ENCODE measurements at regions of chr4 and their contacts with region 1.

Region 1: GRCh38 chr4:88792268-88792781 is 94.7 kb upstream of the NAP1L5 start:
- DNase-seq: no peak
- ATAC-seq: no peak
- H3K4me3 ChIP-seq: no peak overlapping the region
- H3K27ac ChIP-seq: no peak overlapping the region
- H3K4me1 ChIP-seq: no peaks in the 10 kb centered on the region
- H3K27me3 ChIP-seq: no peaks in the 10 kb centered on the region
- CTCF ChIP-seq: no peak

Region 2: GRCh38 chr4:88706574-88706973 is 85.8 kb before region 1 on chr4:
- CTCF ChIA-PET with region 1: no interaction called
- POLR2A ChIA-PET with region 1: no interaction called
- in situ Hi-C with region 1: no loop called
- intact Hi-C with region 1: loop called (anchors 10 kb)
- DNase-seq: no peak
- ATAC-seq: no peak; the same call in 1 of the 2 replicates
- H3K4me3 ChIP-seq: no peak overlapping the region
- H3K27ac ChIP-seq: no peak overlapping the region
- H3K4me1 ChIP-seq: no peaks in the 10 kb centered on the region
- H3K27me3 ChIP-seq: no peaks in the 10 kb centered on the region
- CTCF ChIP-seq: peak; percentile 56

Region 3: GRCh38 chr4:89123451-89123851 is 331.1 kb after region 1 on chr4:
- CTCF ChIA-PET with region 1: no interaction called
- POLR2A ChIA-PET with region 1: interaction called, 14 read pairs
- in situ Hi-C with region 1: no loop called
- intact Hi-C with region 1: no loop called
- DNase-seq: no peak
- ATAC-seq: no peak
- H3K4me3 ChIP-seq: no peak overlapping the region
- H3K27ac ChIP-seq: no peak overlapping the region
- H3K4me1 ChIP-seq: peaks cover 3% of the 10 kb centered on the region; the same call in 1 of the 2 replicates
- H3K27me3 ChIP-seq: no peaks in the 10 kb centered on the region
- CTCF ChIP-seq: no peak

Measured in Panc1 (cell line).